ENCODE measurements at regions of chr10 and their contacts with region 1.

Region 1: GRCh38 chr10:125489731-125490130 is 193.2 kb downstream of the TEX36 start:
- DNase-seq: no peak
- ATAC-seq: no peak
- H3K4me3 ChIP-seq: no peak overlapping the region
- H3K4me3 Mint-ChIP-seq: no peak overlapping the region
- H3K27ac ChIP-seq: no peak overlapping the region
- H3K27ac Mint-ChIP-seq: no peak overlapping the region
- H3K4me1 ChIP-seq: no peaks in the 10 kb centered on the region
- H3K4me1 Mint-ChIP-seq: no peaks in the 10 kb centered on the region
- H3K27me3 ChIP-seq: peaks cover 0 to 3% of the 10 kb centered on the region in 2 donors
- H3K27me3 Mint-ChIP-seq: peaks cover 0 to 25% (median 11%) of the 10 kb centered on the region in 5 donors

Region 2: DNA sequence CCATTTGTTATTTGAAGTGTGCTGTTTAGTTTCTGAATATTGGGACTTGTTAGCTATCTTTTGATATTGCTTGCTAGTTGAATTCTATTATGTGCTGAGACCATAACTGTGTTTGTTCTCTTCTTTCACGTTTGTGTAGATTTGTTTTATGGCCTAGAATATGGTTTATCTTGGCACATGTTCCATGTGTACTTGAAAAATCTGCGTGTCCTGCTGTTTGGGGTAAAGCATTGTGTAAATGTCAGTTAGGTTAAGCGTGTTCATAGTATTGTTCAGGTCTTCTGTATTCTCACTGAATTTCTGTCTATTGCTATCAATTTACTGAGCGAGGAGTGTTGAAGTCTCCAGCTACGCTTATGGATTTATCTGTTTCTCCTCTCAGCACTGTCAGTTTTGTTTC is 266.5 kb after region 1 on chr10:
- CTCF ChIA-PET with region 1: no interaction called
- POLR2A ChIA-PET with region 1: no interaction called
- intact Hi-C with region 1: loop called in 1 of 2 experiments (anchors 5 kb)
- DNase-seq: no peak
- ATAC-seq: no peak
- H3K4me3 ChIP-seq: no peak overlapping the region
- H3K4me3 Mint-ChIP-seq: no peak overlapping the region
- H3K27ac ChIP-seq: no peak overlapping the region
- H3K27ac Mint-ChIP-seq: peak overlapping the region in 4 of 9 donors; percentile 33 to 69 (median 46)
- H3K4me1 ChIP-seq: no peaks in the 10 kb centered on the region
- H3K4me1 Mint-ChIP-seq: peaks cover 2 to 22% (median 16%) of the 10 kb centered on the region in 7 donors
- H3K27me3 ChIP-seq: no peaks in the 10 kb centered on the region
- H3K27me3 Mint-ChIP-seq: no peaks in the 10 kb centered on the region

Measured in naive thymus-derived CD4-positive, alpha-beta T cell (primary cell).